ENCODE measurements at regions of chr17 and their contacts with region 1.

Region 1: GRCh38 chr17:7239091-7240027 is at the start of gene PHF23:
- DNase-seq: peak; percentile 97 to 98 (median 98)
- H3K4me3 ChIP-seq: peak within 1 kb of the TSS; percentile 85 to 86
- H3K4me3 Mint-ChIP-seq: peak within 1 kb of the TSS; percentile 94 to 99 (median 96)
- H3K27ac ChIP-seq: peak within 1 kb of the TSS; percentile 85
- H3K27ac Mint-ChIP-seq: peak within 1 kb of the TSS; percentile 90 to 100 (median 98)
- H3K4me1 ChIP-seq: peaks cover 61% of the 10 kb centered on the region
- H3K4me1 Mint-ChIP-seq: peaks cover 41 to 75% (median 54%) of the 10 kb centered on the region in 4 donors
- H3K27me3 ChIP-seq: no peaks in the 10 kb centered on the region
- H3K27me3 Mint-ChIP-seq: peaks cover 0 to 2% of the 10 kb centered on the region in 2 donors
- total RNA-seq, gene PHF23: 45.8 to 55.8 TPM

Region 2: GRCh38 chr17:7060165-7060891 is 179.0 kb before region 1 on chr17:
- CTCF ChIA-PET with region 1: no interaction called
- POLR2A ChIA-PET with region 1: no interaction called
- intact Hi-C with region 1: no loop called
- DNase-seq: no peak
- H3K4me3 ChIP-seq: no peak overlapping the region
- H3K4me3 Mint-ChIP-seq: no peak overlapping the region
- H3K27ac ChIP-seq: no peak overlapping the region
- H3K27ac Mint-ChIP-seq: no peak overlapping the region
- H3K4me1 ChIP-seq: no peaks in the 10 kb centered on the region
- H3K4me1 Mint-ChIP-seq: peaks cover 0 to 3% (median under 1%) of the 10 kb centered on the region in 4 donors
- H3K27me3 ChIP-seq: no peaks in the 10 kb centered on the region
- H3K27me3 Mint-ChIP-seq: peaks cover 6 to 12% of the 10 kb centered on the region in 2 donors

Region 3: DNA sequence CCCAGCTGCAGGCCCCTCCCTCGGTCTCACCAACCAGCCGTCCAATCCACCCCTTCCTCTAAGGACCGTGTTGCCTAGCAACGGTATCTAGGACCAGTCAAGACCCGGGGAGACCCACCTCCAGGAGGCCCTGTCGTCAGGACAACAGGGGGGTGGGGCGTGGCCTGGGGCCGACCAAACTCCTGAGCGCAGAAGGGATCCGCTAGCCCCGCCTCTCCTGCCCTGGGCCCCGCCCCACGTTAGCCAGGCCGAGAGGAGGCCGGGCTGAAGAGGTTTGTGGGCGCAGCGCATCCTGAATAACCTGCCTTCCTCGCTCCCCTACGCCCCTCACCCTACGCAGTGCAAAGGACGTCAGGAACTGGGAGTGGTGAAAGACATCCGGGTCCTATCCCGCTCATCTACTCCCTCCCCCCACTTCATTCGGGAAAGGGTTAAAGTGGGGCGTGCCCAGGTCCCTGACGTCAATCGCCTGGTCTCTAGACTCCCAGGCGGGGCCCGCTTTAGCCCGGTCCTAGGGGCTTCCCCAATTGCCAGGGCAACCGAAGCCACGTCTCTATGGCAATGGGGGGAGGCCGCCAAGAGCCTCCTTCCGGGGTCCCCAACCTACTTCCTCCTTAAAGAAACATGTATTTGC is 34.4 kb before region 1 on chr17:
- CTCF ChIA-PET with region 1: interaction called, 3 read pairs
- POLR2A ChIA-PET with region 1: interaction called, 12 read pairs
- intact Hi-C with region 1: loop called (anchors 1 kb)
- DNase-seq: peak; percentile 97 to 99 (median 97)
- H3K4me3 ChIP-seq: peak overlapping the region; percentile 19 to 71
- H3K4me3 Mint-ChIP-seq: peak overlapping the region; percentile 78 to 92 (median 89)
- H3K27ac ChIP-seq: peak overlapping the region; percentile 92
- H3K27ac Mint-ChIP-seq: peak overlapping the region; percentile 92 to 100 (median 100)
- H3K4me1 ChIP-seq: peaks cover 21% of the 10 kb centered on the region
- H3K4me1 Mint-ChIP-seq: peaks cover 15 to 38% (median 28%) of the 10 kb centered on the region in 4 donors
- H3K27me3 ChIP-seq: no peaks in the 10 kb centered on the region
- H3K27me3 Mint-ChIP-seq: no peaks in the 10 kb centered on the region

Region 4: GRCh38 chr17:7219812-7220581 is 19.4 kb before region 1 on chr17 and contains the starts of genes ACADVL and DLG4:
- CTCF ChIA-PET with region 1: interaction called, 48 read pairs
- POLR2A ChIA-PET with region 1: interaction called, 435 read pairs
- intact Hi-C with region 1: loop called (anchors 1 kb)
- DNase-seq: peak; percentile 54 to 77 (median 56)
- H3K4me3 ChIP-seq: peak within 1 kb of the TSS; percentile 54 to 89
- H3K4me3 Mint-ChIP-seq: peak within 1 kb of the TSS; percentile 87 to 98 (median 92)
- H3K27ac ChIP-seq: peak within 1 kb of the TSS; percentile 80
- H3K27ac Mint-ChIP-seq: peak within 1 kb of the TSS; percentile 94 to 99 (median 98)
- H3K4me1 ChIP-seq: peaks cover 54% of the 10 kb centered on the region
- H3K4me1 Mint-ChIP-seq: peaks cover 27 to 62% (median 41%) of the 10 kb centered on the region in 4 donors
- H3K27me3 ChIP-seq: no peaks in the 10 kb centered on the region
- H3K27me3 Mint-ChIP-seq: no peaks in the 10 kb centered on the region
- total RNA-seq, gene ACADVL: 340 to 342 TPM
- total RNA-seq, gene DLG4: 7.2 to 7.6 TPM

Region 5: DNA sequence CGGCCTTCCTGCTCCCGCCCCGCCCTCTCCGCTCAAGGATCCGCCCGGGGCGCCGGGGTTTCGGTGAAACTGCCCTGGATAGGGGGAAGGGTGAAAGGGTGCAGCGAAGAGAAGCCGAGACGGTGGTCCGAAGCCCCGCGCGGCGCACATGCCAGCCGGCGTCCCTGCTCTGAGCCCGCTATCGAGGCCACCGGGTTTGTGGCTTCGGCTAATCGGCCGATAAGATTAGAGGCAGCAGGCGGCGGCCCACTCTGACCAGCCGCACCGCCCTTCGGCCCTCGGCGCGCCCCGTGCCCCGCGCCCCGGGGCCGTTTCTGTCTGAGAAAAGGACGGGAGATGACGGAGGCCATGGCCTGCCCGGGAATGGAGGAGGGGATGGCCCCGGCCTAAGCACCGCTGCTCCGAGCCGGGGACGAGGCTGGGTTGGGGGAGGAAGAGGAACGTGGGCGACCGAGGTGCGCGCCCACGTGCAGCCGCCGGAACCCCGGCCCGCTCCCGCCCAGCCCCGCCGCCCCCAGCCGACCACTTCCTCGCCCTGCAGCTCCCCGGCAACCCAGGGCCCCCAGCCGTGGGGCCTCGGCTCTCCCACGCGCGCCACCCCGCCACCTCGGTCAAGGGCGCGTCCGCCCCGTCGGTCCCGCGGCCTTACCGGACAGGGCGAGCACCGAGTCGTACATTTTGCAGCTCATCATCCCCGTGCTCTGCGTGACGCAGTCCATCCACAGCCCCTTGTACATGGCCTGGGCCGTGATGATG is 22.0 kb after region 1 on chr17:
- CTCF ChIA-PET with region 1: no interaction called
- POLR2A ChIA-PET with region 1: interaction called, 10 read pairs
- intact Hi-C with region 1: no loop called
- DNase-seq: no peak
- H3K4me3 ChIP-seq: no peak overlapping the region
- H3K4me3 Mint-ChIP-seq: peak overlapping the region; percentile 46 to 81 (median 68)
- H3K27ac ChIP-seq: peak overlapping the region; percentile 46
- H3K27ac Mint-ChIP-seq: peak overlapping the region in 5 of 7 donors; percentile 22 to 70 (median 59)
- H3K4me1 ChIP-seq: peaks cover 31% of the 10 kb centered on the region
- H3K4me1 Mint-ChIP-seq: peaks cover 14 to 31% (median 23%) of the 10 kb centered on the region in 4 donors
- H3K27me3 ChIP-seq: no peaks in the 10 kb centered on the region
- H3K27me3 Mint-ChIP-seq: peaks cover 3 to 10% of the 10 kb centered on the region in 2 donors

Region 6: DNA sequence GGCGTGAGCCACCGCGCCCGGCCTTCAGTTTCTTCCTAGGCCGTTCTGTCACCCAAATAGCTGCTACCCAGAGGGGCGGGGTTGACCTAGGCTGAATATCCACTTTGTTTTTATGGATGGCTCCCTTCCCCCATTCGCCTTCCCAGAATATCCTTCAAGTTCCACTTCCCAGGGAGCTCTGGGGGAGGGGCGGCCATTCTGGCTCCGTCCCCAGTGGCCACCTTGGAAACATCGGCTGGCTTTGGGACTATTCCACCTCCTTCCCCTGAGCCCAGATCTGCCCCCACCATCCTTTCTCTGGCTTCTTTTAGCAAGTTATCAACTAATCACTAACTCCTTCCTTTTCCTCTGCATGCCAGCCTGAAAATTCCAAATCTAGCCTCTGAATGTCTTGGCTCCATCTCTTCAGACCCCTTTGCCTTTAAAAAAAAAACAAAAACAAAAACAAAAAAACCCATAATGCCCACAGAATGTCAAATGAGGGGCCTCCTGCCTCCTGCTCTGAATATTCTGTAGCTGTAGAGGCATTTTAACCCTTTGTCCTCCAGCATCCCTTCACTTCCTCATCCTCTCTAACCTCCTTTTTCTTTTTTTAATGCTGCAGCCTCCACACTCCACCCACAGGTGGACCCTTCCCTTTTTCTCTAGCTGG is 417.7 kb after region 1 on chr17:
- CTCF ChIA-PET with region 1: no interaction called
- POLR2A ChIA-PET with region 1: no interaction called
- intact Hi-C with region 1: no loop called
- DNase-seq: no peak
- H3K4me3 ChIP-seq: no peak overlapping the region
- H3K4me3 Mint-ChIP-seq: no peak overlapping the region
- H3K27ac ChIP-seq: no peak overlapping the region
- H3K27ac Mint-ChIP-seq: peak overlapping the region in 1 of 7 donors; percentile 38
- H3K4me1 ChIP-seq: no peaks in the 10 kb centered on the region
- H3K4me1 Mint-ChIP-seq: peaks cover 0 to 2% (median 0%) of the 10 kb centered on the region in 4 donors
- H3K27me3 ChIP-seq: no peaks in the 10 kb centered on the region
- H3K27me3 Mint-ChIP-seq: peaks cover 0 to 6% of the 10 kb centered on the region in 2 donors

Region 7: GRCh38 chr17:7844292-7845154 is 605.2 kb after region 1 on chr17:
- CTCF ChIA-PET with region 1: no interaction called
- POLR2A ChIA-PET with region 1: no interaction called
- intact Hi-C with region 1: loop called (anchors 10 kb)
- DNase-seq: peak; percentile 82 to 87 (median 85)
- H3K4me3 ChIP-seq: peak overlapping the region; percentile 57 to 92
- H3K4me3 Mint-ChIP-seq: peak overlapping the region; percentile 92 to 99 (median 97)
- H3K27ac ChIP-seq: peak overlapping the region; percentile 99
- H3K27ac Mint-ChIP-seq: peak overlapping the region; percentile 99 to 100 (median 100)
- H3K4me1 ChIP-seq: peaks cover 30% of the 10 kb centered on the region
- H3K4me1 Mint-ChIP-seq: peaks cover 21 to 50% (median 35%) of the 10 kb centered on the region in 4 donors
- H3K27me3 ChIP-seq: no peaks in the 10 kb centered on the region
- H3K27me3 Mint-ChIP-seq: peaks cover 0 to 3% of the 10 kb centered on the region in 2 donors

Measured in CD4-positive, alpha-beta memory T cell (primary cell).